Sigmoid colon (tissue), 7 donors: ENCODE measurements at regions of chr11 and their contacts with region 1.

Region 1: GRCh38 chr11:112961146-112961668 is at the start of gene NCAM1:
- DNase-seq: peak; percentile 87
- H3K4me3 ChIP-seq: peak within 1 kb of the TSS; percentile 57 to 73 (median 68)
- H3K27ac ChIP-seq: peak within 1 kb of the TSS; percentile 64 to 77 (median 76)
- H3K4me1 ChIP-seq: peaks cover 0 to 20% (median 17%) of the 10 kb centered on the region in 4 donors
- H3K27me3 ChIP-seq: peaks cover 0 to 16% (median 0%) of the 10 kb centered on the region in 3 donors
- CTCF ChIP-seq: no peak
- EP300 ChIP-seq: no peak
- POLR2A ChIP-seq: no peak
- total RNA-seq, gene NCAM1: 64.2 to 124 (median 90.4) TPM

Region 2: GRCh38 chr11:112784323-112785073 is 176.7 kb before region 1 on chr11:
- intact Hi-C with region 1: loop called (anchors 5 kb)
- DNase-seq: peak; percentile 88
- H3K4me3 ChIP-seq: peak overlapping the region in 2 of 4 donors; percentile 4 to 6
- H3K27ac ChIP-seq: peak overlapping the region; percentile 57 to 80 (median 64)
- H3K4me1 ChIP-seq: peaks cover 0 to 43% (median 33%) of the 10 kb centered on the region in 4 donors
- H3K27me3 ChIP-seq: no peaks in the 10 kb centered on the region
- CTCF ChIP-seq: no peak
- EP300 ChIP-seq: peak in 1 of 4 donors; percentile 29
- POLR2A ChIP-seq: no peak

Region 3: GRCh38 chr11:112795142-112795815 is 165.9 kb before region 1 on chr11:
- intact Hi-C with region 1: loop called (anchors 5 kb)
- DNase-seq: no peak
- H3K4me3 ChIP-seq: no peak overlapping the region
- H3K27ac ChIP-seq: peak overlapping the region; percentile 67 to 75 (median 67)
- H3K4me1 ChIP-seq: peaks cover 0 to 44% (median 35%) of the 10 kb centered on the region in 4 donors
- H3K27me3 ChIP-seq: no peaks in the 10 kb centered on the region
- CTCF ChIP-seq: peak in 3 of 4 experiments; percentile 46 to 65 (median 57)
- EP300 ChIP-seq: no peak
- POLR2A ChIP-seq: no peak

Region 4: GRCh38 chr11:112995423-112996090 is 34.4 kb after region 1 on chr11:
- intact Hi-C with region 1: no loop called
- DNase-seq: no peak
- H3K4me3 ChIP-seq: no peak overlapping the region
- H3K27ac ChIP-seq: no peak overlapping the region
- H3K4me1 ChIP-seq: no peaks in the 10 kb centered on the region
- H3K27me3 ChIP-seq: no peaks in the 10 kb centered on the region
- CTCF ChIP-seq: no peak
- EP300 ChIP-seq: no peak
- POLR2A ChIP-seq: no peak

Region 5: GRCh38 chr11:113014262-113015097 is 53.3 kb after region 1 on chr11:
- intact Hi-C with region 1: loop called (anchors 5 kb)
- DNase-seq: peak; percentile 89
- H3K4me3 ChIP-seq: no peak overlapping the region
- H3K27ac ChIP-seq: peak overlapping the region in 3 of 4 donors; percentile 62 to 73 (median 69)
- H3K4me1 ChIP-seq: peaks cover 2 to 20% (median 18%) of the 10 kb centered on the region in 4 donors
- H3K27me3 ChIP-seq: no peaks in the 10 kb centered on the region
- CTCF ChIP-seq: no peak
- EP300 ChIP-seq: no peak
- POLR2A ChIP-seq: no peak

Region 6: DNA sequence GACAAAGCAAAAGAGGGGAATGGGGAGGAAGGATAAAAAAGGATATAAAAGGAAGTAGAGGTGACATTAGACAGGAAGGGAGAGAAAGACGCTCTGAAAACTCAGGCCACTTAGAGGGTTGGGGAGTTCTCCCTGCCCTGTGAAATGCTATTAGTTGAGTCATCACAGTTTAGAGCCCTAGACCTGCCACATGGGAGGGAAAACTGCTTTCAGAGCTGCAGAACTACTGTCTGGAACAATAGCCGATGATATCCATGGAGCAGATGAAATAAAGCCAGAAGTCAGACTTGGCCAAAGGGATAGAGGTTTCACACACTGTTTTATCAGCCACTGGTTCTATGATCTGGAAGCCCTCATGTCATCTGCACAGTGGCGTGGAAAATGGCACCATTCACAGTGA is 157.9 kb after region 1 on chr11:
- intact Hi-C with region 1: loop called (anchors 5 kb)
- DNase-seq: no peak
- H3K4me3 ChIP-seq: no peak overlapping the region
- H3K27ac ChIP-seq: peak overlapping the region in 3 of 4 donors; percentile 2 to 46 (median 45)
- H3K4me1 ChIP-seq: peaks cover 0 to 38% (median 26%) of the 10 kb centered on the region in 4 donors
- H3K27me3 ChIP-seq: no peaks in the 10 kb centered on the region
- CTCF ChIP-seq: no peak
- EP300 ChIP-seq: no peak
- POLR2A ChIP-seq: no peak

Region 7: GRCh38 chr11:113289431-113290187 is 328.4 kb after region 1 on chr11:
- intact Hi-C with region 1: loop called (anchors 10 kb)
- DNase-seq: peak; percentile 80
- H3K4me3 ChIP-seq: no peak overlapping the region
- H3K27ac ChIP-seq: no peak overlapping the region
- H3K4me1 ChIP-seq: peaks cover 0 to 17% (median 17%) of the 10 kb centered on the region in 4 donors
- H3K27me3 ChIP-seq: no peaks in the 10 kb centered on the region
- CTCF ChIP-seq: peak; percentile 80 to 96 (median 86)
- EP300 ChIP-seq: no peak
- POLR2A ChIP-seq: no peak